HepG2 (cell line): ENCODE measurements at regions of chr1 and their contacts with region 1.

Region 1: DNA sequence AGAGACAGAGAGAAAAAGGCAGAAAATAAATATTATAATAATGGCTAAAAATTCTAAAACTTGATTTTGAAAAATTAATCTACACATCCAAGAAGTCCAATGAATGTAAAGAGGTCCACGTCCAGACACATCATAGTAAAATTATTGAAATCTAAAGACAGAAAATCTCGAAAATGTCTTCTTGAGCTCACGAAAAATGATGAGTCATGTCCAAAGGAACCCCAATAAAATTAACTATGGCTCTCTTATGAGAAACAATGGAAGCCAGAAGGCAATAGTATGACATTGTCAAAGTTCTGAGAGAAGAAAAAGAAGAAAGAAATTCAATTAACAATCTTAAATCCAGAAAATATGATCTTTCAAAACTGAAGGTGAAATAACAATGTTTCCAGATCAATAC is 84.6 kb downstream of the LRRIQ3 start:
- DNase-seq: no peak
- ATAC-seq: no peak
- H3K4me3 ChIP-seq: no peak overlapping the region
- H3K27ac ChIP-seq: no peak overlapping the region
- H3K4me1 ChIP-seq: no peaks in the 10 kb centered on the region
- H3K27me3 ChIP-seq: no peaks in the 10 kb centered on the region; a peak in 1 of 5 replicates
- CTCF ChIP-seq: no peak
- EP300 ChIP-seq: no peak
- POLR2A ChIP-seq: no peak
- RAD21 ChIP-seq: no peak

Region 2: GRCh38 chr1:74160046-74160445 is 46.7 kb after region 1 on chr1:
- CTCF ChIA-PET with region 1: no interaction called
- POLR2A ChIA-PET with region 1: no interaction called
- in situ Hi-C with region 1: no loop called
- intact Hi-C with region 1: loop called (anchors 1 kb)
- DNase-seq: no peak
- ATAC-seq: no peak
- H3K4me3 ChIP-seq: no peak overlapping the region
- H3K27ac ChIP-seq: no peak overlapping the region
- H3K4me1 ChIP-seq: no peaks in the 10 kb centered on the region
- H3K27me3 ChIP-seq: no peaks in the 10 kb centered on the region
- CTCF ChIP-seq: no peak
- EP300 ChIP-seq: no peak
- POLR2A ChIP-seq: no peak
- RAD21 ChIP-seq: no peak

Region 3: DNA sequence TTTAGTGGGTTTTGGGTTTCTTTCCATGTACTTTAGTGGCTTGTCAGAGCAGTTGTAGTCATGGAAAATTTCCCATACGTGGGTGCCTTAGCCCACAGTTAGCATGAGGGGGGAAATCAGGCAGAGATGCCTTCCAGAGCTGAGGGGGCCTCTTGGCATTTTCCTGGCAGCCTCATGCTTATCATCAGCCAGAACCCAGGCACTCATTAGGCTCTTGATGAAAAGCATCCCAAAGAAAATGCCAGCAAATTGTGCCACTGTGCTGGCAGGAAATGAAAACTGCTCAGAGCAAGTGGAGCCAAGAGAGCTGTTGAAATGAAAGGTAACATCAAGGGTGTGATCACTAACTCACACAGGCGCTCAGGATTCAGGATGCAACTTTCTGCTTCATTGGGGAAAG is 249.9 kb after region 1 on chr1:
- CTCF ChIA-PET with region 1: no interaction called
- POLR2A ChIA-PET with region 1: no interaction called
- in situ Hi-C with region 1: no loop called
- intact Hi-C with region 1: no loop called
- DNase-seq: no peak
- ATAC-seq: no peak
- H3K4me3 ChIP-seq: no peak overlapping the region
- H3K27ac ChIP-seq: no peak overlapping the region
- H3K4me1 ChIP-seq: no peaks in the 10 kb centered on the region
- H3K27me3 ChIP-seq: no peaks in the 10 kb centered on the region
- CTCF ChIP-seq: no peak
- EP300 ChIP-seq: no peak
- POLR2A ChIP-seq: no peak
- RAD21 ChIP-seq: no peak